Naive thymus-derived CD4-positive, alpha-beta T cell (primary cell): ENCODE measurements at regions of chr6 and their contacts with region 1.

Region 1: GRCh38 chr6:25107218-25107617 is 171.5 kb upstream of the RIPOR2 start:
- DNase-seq: no peak
- ATAC-seq: no peak
- H3K4me3 ChIP-seq: no peak overlapping the region
- H3K4me3 Mint-ChIP-seq: no peak overlapping the region
- H3K27ac ChIP-seq: no peak overlapping the region
- H3K27ac Mint-ChIP-seq: no peak overlapping the region
- H3K4me1 ChIP-seq: no peaks in the 10 kb centered on the region
- H3K4me1 Mint-ChIP-seq: peaks cover 0 to 34% (median 0%) of the 10 kb centered on the region in 7 donors
- H3K27me3 ChIP-seq: no peaks in the 10 kb centered on the region
- H3K27me3 Mint-ChIP-seq: no peaks in the 10 kb centered on the region

Region 2: GRCh38 chr6:25118038-25118437 is 10.8 kb after region 1 on chr6:
- CTCF ChIA-PET with region 1: no interaction called
- POLR2A ChIA-PET with region 1: interaction called, 6 read pairs
- intact Hi-C with region 1: loop called in 1 of 2 experiments (anchors 2 kb)
- DNase-seq: no peak
- ATAC-seq: no peak
- H3K4me3 ChIP-seq: no peak overlapping the region
- H3K4me3 Mint-ChIP-seq: peak overlapping the region in 1 of 10 donors; percentile 23
- H3K27ac ChIP-seq: no peak overlapping the region
- H3K27ac Mint-ChIP-seq: peak overlapping the region in 2 of 9 donors; percentile 3 to 66
- H3K4me1 ChIP-seq: no peaks in the 10 kb centered on the region
- H3K4me1 Mint-ChIP-seq: peaks cover 11 to 55% (median 23%) of the 10 kb centered on the region in 7 donors
- H3K27me3 ChIP-seq: no peaks in the 10 kb centered on the region
- H3K27me3 Mint-ChIP-seq: no peaks in the 10 kb centered on the region

Region 3: DNA sequence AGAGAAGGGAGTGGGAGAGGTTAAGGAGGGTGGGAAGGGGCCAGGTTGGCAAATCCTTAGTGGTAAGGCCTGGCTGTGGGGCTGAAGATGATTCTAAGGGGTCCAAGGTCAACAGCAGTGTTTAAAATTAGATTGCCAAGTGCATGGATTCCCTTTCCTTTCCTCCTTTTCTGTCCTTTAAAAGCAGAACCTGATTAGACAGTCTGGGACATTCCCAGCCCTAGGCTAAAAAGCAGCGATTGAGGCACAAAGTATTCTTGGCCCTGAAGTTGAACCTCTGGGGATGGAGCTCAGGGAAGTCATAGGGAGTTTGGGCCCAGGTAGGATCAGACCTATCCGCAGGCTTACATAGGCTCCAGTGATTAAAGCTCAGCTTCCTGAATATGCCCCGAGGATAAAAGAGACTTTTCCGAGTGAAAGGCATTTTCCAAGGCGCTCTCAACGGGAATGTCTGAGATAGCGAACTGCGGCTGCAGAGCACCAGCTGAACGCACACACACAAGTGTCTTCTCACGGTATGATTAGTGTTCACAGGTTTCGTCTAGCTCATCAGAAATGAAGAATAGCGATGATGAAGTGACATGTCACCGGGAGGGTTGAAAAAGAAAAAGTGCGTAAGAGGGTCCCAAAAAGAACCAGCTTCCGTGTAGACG is 171.2 kb after region 1 on chr6:
- CTCF ChIA-PET with region 1: no interaction called
- POLR2A ChIA-PET with region 1: no interaction called
- intact Hi-C with region 1: no loop called
- DNase-seq: no peak
- ATAC-seq: peak; percentile 16
- H3K4me3 ChIP-seq: peak overlapping the region; percentile 64
- H3K4me3 Mint-ChIP-seq: peak overlapping the region; percentile 88 to 98 (median 94)
- H3K27ac ChIP-seq: peak overlapping the region; percentile 77
- H3K27ac Mint-ChIP-seq: peak overlapping the region; percentile 74 to 94 (median 86)
- H3K4me1 ChIP-seq: peaks cover 14 to 15% of the 10 kb centered on the region in 2 donors
- H3K4me1 Mint-ChIP-seq: peaks cover 19 to 57% (median 41%) of the 10 kb centered on the region in 7 donors
- H3K27me3 ChIP-seq: no peaks in the 10 kb centered on the region
- H3K27me3 Mint-ChIP-seq: peaks cover 2 to 20% (median 8%) of the 10 kb centered on the region in 5 donors